H1 (cell line): ENCODE measurements at regions of chr18 and their contacts with region 1.

Region 1: DNA sequence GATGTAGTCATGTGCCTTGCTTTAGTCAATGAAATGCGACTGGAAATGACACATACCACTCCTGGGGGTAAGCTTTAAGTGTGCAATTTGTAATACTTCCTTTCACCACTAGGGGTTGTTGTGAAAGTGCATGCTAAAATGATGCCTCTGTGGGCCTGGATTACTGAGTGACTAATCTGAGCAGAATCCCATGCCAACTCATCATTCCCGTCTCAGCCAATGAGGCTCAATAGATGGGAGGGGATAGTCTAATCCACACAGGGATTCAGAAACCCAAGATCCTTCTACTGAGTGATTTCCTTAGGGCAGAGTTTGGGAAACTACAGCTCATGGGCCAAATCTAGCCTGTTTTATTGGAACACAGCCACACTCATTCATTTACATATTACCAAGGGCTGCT is 54.0 kb downstream of the HRH4 start:
- DNase-seq: peak in 1 of 2 experiments; percentile 29
- H3K4me3 ChIP-seq: no peak overlapping the region
- H3K27ac ChIP-seq: no peak overlapping the region
- H3K4me1 ChIP-seq: no peaks in the 10 kb centered on the region
- H3K27me3 ChIP-seq: no peaks in the 10 kb centered on the region
- CTCF ChIP-seq: peak in 2 of 3 experiments; percentile 28 to 77; a peak in 2 of 4 replicates
- EP300 ChIP-seq: no peak
- POLR2A ChIP-seq: no peak
- RAD21 ChIP-seq: peak; percentile 28 to 40

Region 2: GRCh38 chr18:24404591-24404990 is 109.8 kb before region 1 on chr18:
- CTCF ChIA-PET with region 1: no interaction called
- POLR2A ChIA-PET with region 1: no interaction called
- DNase-seq: no peak
- H3K4me3 ChIP-seq: no peak overlapping the region
- H3K27ac ChIP-seq: no peak overlapping the region
- H3K4me1 ChIP-seq: peaks cover 0 to 9% (median 5%) of the 10 kb centered on the region in 4 experiments; a peak in 6 of 7 replicates
- H3K27me3 ChIP-seq: no peaks in the 10 kb centered on the region; a peak in 1 of 7 replicates
- CTCF ChIP-seq: no peak
- EP300 ChIP-seq: no peak
- POLR2A ChIP-seq: no peak
- RAD21 ChIP-seq: no peak

Region 3: GRCh38 chr18:24497031-24497754 is 17.2 kb before region 1 on chr18:
- CTCF ChIA-PET with region 1: interaction called, 62 read pairs
- POLR2A ChIA-PET with region 1: no interaction called
- DNase-seq: no peak
- H3K4me3 ChIP-seq: no peak overlapping the region
- H3K27ac ChIP-seq: no peak overlapping the region
- H3K4me1 ChIP-seq: no peaks in the 10 kb centered on the region
- H3K27me3 ChIP-seq: no peaks in the 10 kb centered on the region
- CTCF ChIP-seq: no peak
- EP300 ChIP-seq: no peak
- POLR2A ChIP-seq: no peak
- RAD21 ChIP-seq: no peak

Region 4: DNA sequence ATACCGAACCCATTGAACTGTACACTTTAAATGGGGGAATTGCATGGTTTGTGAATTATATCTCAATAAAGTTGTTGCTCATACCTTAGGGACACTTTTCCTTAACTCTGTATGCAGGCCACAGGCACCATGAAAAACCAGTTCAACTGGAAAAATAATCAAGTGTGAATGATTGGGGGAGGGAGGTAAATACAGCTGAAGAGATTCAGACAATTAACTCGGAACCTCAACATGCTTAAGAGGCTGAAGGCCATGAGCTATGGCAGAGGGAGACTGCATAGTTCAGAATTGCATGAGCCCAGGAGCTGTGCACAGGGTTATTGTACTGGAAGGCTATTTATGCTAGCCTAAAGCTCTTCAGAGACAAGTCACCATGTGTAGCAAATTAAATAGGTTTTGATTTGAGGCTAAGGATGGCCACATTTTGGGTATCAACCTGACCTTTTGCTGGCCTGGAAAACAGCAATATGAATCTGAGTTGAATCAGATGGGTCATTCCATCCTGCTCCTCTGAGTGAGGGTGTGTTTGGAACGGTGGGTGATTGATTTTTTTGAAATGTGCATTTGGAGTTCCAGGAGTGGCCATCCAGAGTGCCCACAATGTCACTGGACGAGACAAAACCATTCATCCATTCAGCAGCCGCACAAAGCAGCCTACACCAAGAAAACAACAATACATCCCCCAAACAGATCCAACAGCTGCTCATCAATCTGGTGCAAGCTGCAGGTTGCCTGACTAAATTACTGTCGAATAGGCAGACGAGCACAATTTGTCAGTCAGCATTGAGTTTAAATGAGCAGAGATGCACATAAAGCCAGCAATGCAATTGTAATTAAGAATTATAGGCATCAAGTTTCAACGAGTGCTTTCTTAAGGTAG is 11.6 kb before region 1 on chr18:
- CTCF ChIA-PET with region 1: interaction called, 62 read pairs
- POLR2A ChIA-PET with region 1: no interaction called
- DNase-seq: no peak
- H3K4me3 ChIP-seq: no peak overlapping the region
- H3K27ac ChIP-seq: no peak overlapping the region
- H3K4me1 ChIP-seq: no peaks in the 10 kb centered on the region; a peak in 1 of 7 replicates
- H3K27me3 ChIP-seq: no peaks in the 10 kb centered on the region
- CTCF ChIP-seq: no peak
- EP300 ChIP-seq: no peak
- POLR2A ChIP-seq: no peak
- RAD21 ChIP-seq: no peak

Region 5: GRCh38 chr18:24530630-24531111 is 16.2 kb after region 1 on chr18:
- CTCF ChIA-PET with region 1: interaction called, 13 read pairs
- POLR2A ChIA-PET with region 1: no interaction called
- DNase-seq: no peak
- H3K4me3 ChIP-seq: no peak overlapping the region
- H3K27ac ChIP-seq: no peak overlapping the region
- H3K4me1 ChIP-seq: no peaks in the 10 kb centered on the region
- H3K27me3 ChIP-seq: no peaks in the 10 kb centered on the region
- CTCF ChIP-seq: no peak
- EP300 ChIP-seq: no peak
- POLR2A ChIP-seq: no peak
- RAD21 ChIP-seq: no peak